Activated B cell treated with CpG ODN at 0.5 μM for 24 hours (primary cell): ENCODE measurements at regions of chr13 and their contacts with region 1.

Region 1: GRCh38 chr13:20160847-20161274 is at the start of gene GJA3:
- DNase-seq: peak; percentile 54
- ATAC-seq: peak; percentile 66
- H3K4me3 Mint-ChIP-seq: peak within 1 kb of the TSS; percentile 85
- H3K27ac Mint-ChIP-seq: no peak within 1 kb of the TSS
- H3K4me1 Mint-ChIP-seq: peaks cover 18% of the 10 kb centered on the region
- H3K27me3 Mint-ChIP-seq: peaks cover 7% of the 10 kb centered on the region
- CTCF ChIP-seq: no peak
- total RNA-seq, gene GJA3: 0.09 and 0.10 TPM in 2 replicates

Region 2: GRCh38 chr13:19782049-19782726 is 378.7 kb before region 1 on chr13:
- CTCF ChIA-PET with region 1: no interaction called
- POLR2A ChIA-PET with region 1: interaction called, 3 read pairs
- intact Hi-C with region 1: loop called (anchors 5 kb)
- DNase-seq: peak; percentile 57
- ATAC-seq: peak; percentile 61
- H3K4me3 Mint-ChIP-seq: peak overlapping the region; percentile 97
- H3K27ac Mint-ChIP-seq: peak overlapping the region; percentile 98
- H3K4me1 Mint-ChIP-seq: peaks cover 15% of the 10 kb centered on the region
- H3K27me3 Mint-ChIP-seq: no peaks in the 10 kb centered on the region
- CTCF ChIP-seq: no peak

Region 3: DNA sequence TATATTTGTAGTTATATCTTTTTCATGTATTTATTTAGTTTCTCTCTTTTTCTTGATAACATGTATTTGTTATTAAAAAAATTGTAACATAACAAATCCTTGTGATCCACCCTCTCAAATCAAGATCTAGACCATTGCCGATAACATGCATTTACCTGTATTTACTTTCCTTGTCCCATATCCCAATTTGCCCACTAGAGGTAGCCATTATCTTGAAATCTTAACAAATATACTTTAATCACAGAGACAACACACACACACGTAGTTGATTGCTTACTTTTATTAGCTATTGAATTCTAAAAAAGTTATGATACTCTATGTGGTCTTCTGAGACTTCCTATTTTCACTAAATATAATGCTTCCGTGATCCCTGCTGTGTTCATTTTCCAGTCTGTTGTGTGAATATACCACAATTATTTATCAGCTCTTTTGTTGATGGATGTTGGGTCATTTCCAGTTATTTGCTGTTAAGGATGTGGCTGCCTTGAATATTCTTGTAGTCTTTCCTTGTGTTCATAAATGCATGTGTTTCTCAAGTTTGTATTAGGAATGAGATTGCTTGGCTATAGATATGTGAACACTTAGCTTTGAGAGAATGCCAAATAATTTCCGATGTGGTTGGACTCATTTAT is 233.6 kb before region 1 on chr13:
- CTCF ChIA-PET with region 1: no interaction called
- POLR2A ChIA-PET with region 1: no interaction called
- intact Hi-C with region 1: loop called (anchors 1 kb)
- DNase-seq: no peak
- ATAC-seq: no peak
- H3K4me3 Mint-ChIP-seq: no peak overlapping the region
- H3K27ac Mint-ChIP-seq: no peak overlapping the region
- H3K4me1 Mint-ChIP-seq: no peaks in the 10 kb centered on the region
- H3K27me3 Mint-ChIP-seq: peaks cover 2% of the 10 kb centered on the region
- CTCF ChIP-seq: no peak

Region 4: GRCh38 chr13:19984430-19985218 is 176.2 kb before region 1 on chr13:
- CTCF ChIA-PET with region 1: interaction called, 14 read pairs
- POLR2A ChIA-PET with region 1: interaction called, 3 read pairs
- intact Hi-C with region 1: loop called (anchors 1 kb)
- DNase-seq: no peak
- ATAC-seq: peak; percentile 79
- H3K4me3 Mint-ChIP-seq: no peak overlapping the region
- H3K27ac Mint-ChIP-seq: peak overlapping the region; percentile 2
- H3K4me1 Mint-ChIP-seq: peaks cover 23% of the 10 kb centered on the region
- H3K27me3 Mint-ChIP-seq: no peaks in the 10 kb centered on the region
- CTCF ChIP-seq: no peak

Region 5: DNA sequence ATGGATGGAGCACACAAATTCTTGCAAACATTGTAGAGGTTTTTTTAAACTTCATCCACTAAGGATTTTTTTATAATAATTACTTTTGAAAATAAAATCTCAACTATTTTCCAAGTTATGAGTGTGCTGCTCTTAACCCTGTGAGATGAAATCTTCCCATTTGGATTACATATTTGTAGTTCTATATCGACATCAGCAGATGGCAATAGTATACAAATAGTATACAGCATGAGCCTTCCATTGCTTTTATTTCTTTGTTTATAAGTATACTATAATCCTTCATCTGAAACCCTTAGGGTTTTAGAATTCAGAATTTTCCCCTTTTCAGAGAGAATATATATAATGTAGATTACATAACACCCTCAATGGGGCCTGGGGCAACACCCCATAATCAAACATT is 70.5 kb before region 1 on chr13:
- CTCF ChIA-PET with region 1: interaction called, 3 read pairs
- POLR2A ChIA-PET with region 1: no interaction called
- intact Hi-C with region 1: loop called (anchors 1 kb)
- DNase-seq: no peak
- ATAC-seq: no peak
- H3K4me3 Mint-ChIP-seq: no peak overlapping the region
- H3K27ac Mint-ChIP-seq: no peak overlapping the region
- H3K4me1 Mint-ChIP-seq: no peaks in the 10 kb centered on the region
- H3K27me3 Mint-ChIP-seq: no peaks in the 10 kb centered on the region
- CTCF ChIP-seq: no peak

Region 6: DNA sequence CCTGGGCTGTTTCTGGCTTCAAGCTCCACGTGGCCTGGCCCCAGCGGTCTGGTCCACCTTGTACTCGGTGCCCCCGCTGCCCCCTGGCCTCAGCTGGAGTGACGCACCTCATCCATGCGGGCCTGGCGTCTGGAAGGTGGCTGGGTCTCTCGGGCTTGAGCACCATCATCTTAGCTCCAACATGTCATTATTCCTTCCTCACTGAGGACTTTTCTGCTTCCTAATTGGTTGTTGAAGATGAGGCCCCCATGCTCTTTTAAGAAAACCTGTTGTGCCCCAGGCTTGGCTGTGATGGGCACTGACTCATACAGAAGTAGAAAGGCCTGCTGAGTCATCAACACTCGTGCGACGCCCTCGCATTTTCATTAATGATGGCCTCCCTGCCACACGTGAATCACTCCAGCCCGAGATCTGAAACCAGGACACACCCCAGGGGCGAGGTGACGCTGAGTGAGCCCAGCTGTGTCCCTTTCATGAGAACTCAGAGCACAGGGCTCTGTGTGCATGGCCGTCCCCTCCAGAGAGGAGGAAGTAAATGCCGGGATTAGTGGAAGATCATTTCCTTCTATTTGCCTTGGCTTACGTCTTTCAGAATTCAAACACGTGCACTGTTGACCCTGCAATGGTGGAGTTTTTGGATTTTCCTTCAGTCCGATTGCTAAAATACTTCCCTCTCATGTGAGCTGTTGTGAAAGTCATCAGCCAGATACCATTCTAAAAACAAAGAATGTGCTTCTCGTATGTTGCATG is 14.0 kb after region 1 on chr13:
- CTCF ChIA-PET with region 1: no interaction called
- POLR2A ChIA-PET with region 1: interaction called, 3 read pairs
- intact Hi-C with region 1: loop called (anchors 1 kb)
- DNase-seq: peak; percentile 39
- ATAC-seq: peak; percentile 95
- H3K4me3 Mint-ChIP-seq: no peak overlapping the region
- H3K27ac Mint-ChIP-seq: no peak overlapping the region
- H3K4me1 Mint-ChIP-seq: peaks cover 15% of the 10 kb centered on the region
- H3K27me3 Mint-ChIP-seq: peaks cover 74% of the 10 kb centered on the region
- CTCF ChIP-seq: no peak